Sigmoid colon (tissue), 7 donors: ENCODE measurements at regions of chr5 and their contacts with region 1.

Region 1: DNA sequence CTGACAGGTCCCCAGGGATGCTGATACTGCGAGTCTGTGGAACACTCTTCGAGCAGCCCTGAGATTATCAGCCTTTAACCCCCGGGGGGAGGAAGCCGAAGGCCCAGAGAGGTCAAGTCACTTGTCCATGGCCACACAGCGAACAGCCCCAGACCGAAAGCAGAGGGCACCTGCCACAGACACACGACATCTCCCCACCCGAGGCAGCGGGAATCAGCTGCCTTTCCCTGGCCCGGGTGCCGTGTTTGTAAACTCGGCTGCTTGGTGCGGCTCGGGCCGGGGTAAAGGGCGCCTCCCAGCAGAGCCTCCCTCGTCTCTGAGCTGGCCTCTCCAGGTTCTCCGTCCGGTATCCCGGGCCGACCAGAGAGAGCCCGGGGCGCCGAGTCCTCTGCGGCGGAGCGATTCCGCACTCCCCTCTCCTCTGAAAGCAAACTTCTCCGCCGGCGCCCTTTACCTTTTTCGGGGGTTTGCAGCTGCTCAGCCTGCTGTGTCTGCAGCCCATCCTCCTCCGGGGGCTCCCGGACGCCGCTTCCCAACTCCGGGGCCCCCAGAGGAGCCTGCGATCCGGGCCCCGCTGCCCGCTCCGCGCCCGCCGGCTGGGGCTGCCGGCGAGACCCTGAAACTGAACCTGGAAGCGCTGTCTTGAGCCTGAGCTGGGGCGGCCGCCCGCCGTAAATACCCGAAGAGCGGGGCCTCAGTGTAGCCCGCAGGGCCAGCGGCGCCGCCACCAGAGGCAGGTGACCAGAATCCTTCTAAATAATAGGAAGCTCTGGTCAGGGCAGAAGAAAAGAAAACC is at the start of gene CCDC69:
- DNase-seq: peak; percentile 91
- H3K4me3 ChIP-seq: peak within 1 kb of the TSS; percentile 78 to 95 (median 87)
- H3K27ac ChIP-seq: peak within 1 kb of the TSS; percentile 90 to 99 (median 94)
- H3K4me1 ChIP-seq: peaks cover 0 to 53% (median 48%) of the 10 kb centered on the region in 4 donors
- H3K27me3 ChIP-seq: no peaks in the 10 kb centered on the region
- CTCF ChIP-seq: peak in 2 of 4 experiments; percentile 18 to 26
- EP300 ChIP-seq: peak in 1 of 4 donors; percentile 16
- POLR2A ChIP-seq: peak; percentile 88
- total RNA-seq, gene CCDC69: 199 to 342 (median 258) TPM

Region 2: DNA sequence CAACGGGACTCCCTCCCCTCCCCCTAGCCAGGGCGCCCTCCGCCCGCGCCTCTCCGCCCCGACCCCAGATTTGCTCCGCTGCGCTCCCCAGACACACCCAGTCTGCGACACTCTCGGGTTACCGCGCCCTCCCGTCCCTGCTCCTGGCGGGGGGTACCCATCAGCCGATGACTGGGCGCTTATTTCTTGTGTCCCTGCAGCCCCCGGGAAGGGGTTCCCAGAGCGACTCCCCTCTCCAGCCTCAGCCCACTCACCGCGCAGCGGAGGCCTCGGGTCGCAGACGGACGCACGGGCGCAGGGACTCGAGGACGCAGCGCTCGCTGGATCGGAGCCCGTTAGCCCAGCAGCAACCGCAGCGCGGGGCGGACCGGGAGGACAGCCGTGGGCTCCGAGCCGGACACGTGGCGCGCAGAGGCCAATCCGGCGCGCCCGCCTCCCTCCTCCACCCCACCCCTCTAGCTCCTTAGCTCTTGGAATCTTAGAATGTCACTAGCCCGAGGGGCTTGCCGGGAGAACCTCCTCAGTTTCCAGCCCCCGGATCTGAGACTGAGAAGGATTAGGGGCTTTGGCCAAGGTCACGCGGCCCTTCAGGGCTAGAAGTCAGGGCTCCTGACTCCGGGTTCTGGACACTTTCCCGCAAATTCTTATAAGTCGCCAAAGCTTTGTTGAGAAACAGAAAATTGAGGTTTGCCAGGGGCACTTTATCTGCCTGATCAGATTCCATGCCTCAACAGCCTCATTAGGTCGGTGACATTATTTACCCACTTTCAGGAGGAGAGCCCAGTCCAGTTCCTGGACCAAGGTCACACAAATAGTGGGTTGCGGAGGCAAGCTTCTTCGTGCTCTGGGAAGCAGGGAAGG is 66.0 kb before region 1 on chr5 and contains the start of gene ANXA6:
- intact Hi-C with region 1: loop called (anchors 5 kb)
- DNase-seq: peak; percentile 95
- H3K4me3 ChIP-seq: peak within 1 kb of the TSS; percentile 74 to 92 (median 82)
- H3K27ac ChIP-seq: peak within 1 kb of the TSS; percentile 88 to 97 (median 93)
- H3K4me1 ChIP-seq: peaks cover 0 to 56% (median 52%) of the 10 kb centered on the region in 4 donors
- H3K27me3 ChIP-seq: no peaks in the 10 kb centered on the region
- CTCF ChIP-seq: no peak
- EP300 ChIP-seq: no peak
- POLR2A ChIP-seq: peak; percentile 60 to 72
- total RNA-seq, gene ANXA6: 233 to 333 (median 259) TPM

Region 3: DNA sequence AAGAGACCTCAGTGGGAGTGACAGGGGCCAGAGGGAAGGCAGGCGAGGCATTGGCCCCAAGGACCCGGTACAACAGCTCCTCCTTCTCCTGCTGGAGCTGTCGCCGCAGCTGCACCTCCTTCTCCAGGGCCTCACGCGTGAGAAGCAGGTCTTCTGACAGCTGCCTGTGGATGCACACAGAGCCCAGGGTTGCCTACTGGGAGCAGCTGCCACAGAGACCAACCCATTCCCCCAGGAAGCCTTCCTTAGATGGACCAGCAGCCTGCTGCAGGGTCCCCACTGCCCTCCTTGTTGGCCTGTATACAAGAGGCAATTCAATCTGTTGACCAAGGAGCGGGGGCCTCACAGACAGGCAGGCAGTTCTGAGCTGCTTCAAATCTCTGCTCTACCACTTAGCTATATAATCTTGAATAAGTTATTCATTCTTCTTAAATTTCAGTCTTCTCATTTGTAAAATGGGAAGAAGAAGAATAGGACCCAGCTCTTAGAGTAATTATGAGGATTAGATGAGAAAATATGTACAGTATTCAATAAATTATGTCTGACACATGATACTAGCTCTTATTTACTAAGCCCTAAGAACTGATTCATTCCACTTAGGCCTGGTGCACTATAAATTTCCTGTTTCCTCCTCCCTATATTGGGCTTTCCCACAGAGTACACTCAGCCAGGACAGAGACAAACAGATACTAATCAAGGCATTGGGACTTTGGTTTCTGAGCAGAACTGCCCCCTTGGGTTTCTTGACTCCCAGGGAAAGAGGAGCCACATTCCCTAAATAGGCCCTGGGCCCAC is 40.0 kb before region 1 on chr5:
- intact Hi-C with region 1: no loop called
- DNase-seq: no peak
- H3K4me3 ChIP-seq: no peak overlapping the region
- H3K27ac ChIP-seq: no peak overlapping the region
- H3K4me1 ChIP-seq: peaks cover 0 to 13% (median 5%) of the 10 kb centered on the region in 4 donors
- H3K27me3 ChIP-seq: no peaks in the 10 kb centered on the region
- CTCF ChIP-seq: no peak
- EP300 ChIP-seq: no peak
- POLR2A ChIP-seq: no peak

Region 4: DNA sequence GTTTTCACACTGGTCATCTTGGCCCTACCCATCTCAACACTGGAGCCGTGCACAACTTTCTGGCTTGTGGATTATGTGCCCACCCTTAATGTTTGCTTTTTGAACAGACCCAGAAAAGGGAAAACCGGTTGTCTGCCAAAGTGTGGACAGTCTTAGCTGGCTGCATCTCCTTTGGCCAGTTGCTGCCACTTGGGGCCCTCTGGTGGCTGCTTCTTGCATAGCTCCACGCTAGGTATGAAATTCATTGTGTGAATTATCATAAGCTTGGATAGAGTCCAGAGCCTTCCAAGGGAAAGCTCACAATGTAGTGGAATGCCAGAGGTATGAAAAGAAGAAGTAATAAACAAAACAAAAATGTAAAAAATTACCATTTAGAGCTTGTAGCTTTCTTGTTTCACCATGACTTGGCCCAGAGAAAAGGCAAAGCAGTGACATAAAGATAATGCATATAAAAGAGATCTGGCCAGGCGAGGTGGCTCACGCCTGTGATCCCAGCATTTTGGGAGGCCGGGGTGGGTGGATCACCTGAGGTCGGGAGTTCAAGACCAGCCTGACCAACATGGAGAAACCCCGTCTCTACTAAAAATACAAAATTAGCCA is 92.4 kb after region 1 on chr5:
- intact Hi-C with region 1: no loop called
- DNase-seq: peak; percentile 80
- H3K4me3 ChIP-seq: no peak overlapping the region
- H3K27ac ChIP-seq: no peak overlapping the region
- H3K4me1 ChIP-seq: peaks cover 0 to 12% (median 11%) of the 10 kb centered on the region in 4 donors
- H3K27me3 ChIP-seq: no peaks in the 10 kb centered on the region
- CTCF ChIP-seq: peak; percentile 31 to 83 (median 68)
- EP300 ChIP-seq: no peak
- POLR2A ChIP-seq: no peak

Region 5: GRCh38 chr5:151447174-151448037 is 223.7 kb after region 1 on chr5 and contains the start of gene SLC36A1:
- intact Hi-C with region 1: no loop called
- DNase-seq: peak; percentile 97
- H3K4me3 ChIP-seq: peak within 1 kb of the TSS; percentile 69 to 84 (median 79)
- H3K27ac ChIP-seq: peak within 1 kb of the TSS; percentile 72 to 78 (median 76)
- H3K4me1 ChIP-seq: peaks cover 0 to 15% (median 10%) of the 10 kb centered on the region in 4 donors
- H3K27me3 ChIP-seq: no peaks in the 10 kb centered on the region
- CTCF ChIP-seq: peak; percentile 90 to 97 (median 96)
- EP300 ChIP-seq: no peak
- POLR2A ChIP-seq: peak in 1 of 2 donors; percentile 22
- total RNA-seq, gene SLC36A1: 6.9 to 9.7 (median 8.6) TPM